MCF 10A (cell line): ENCODE measurements at regions of chr17 and their contacts with region 1.

Region 1: DNA sequence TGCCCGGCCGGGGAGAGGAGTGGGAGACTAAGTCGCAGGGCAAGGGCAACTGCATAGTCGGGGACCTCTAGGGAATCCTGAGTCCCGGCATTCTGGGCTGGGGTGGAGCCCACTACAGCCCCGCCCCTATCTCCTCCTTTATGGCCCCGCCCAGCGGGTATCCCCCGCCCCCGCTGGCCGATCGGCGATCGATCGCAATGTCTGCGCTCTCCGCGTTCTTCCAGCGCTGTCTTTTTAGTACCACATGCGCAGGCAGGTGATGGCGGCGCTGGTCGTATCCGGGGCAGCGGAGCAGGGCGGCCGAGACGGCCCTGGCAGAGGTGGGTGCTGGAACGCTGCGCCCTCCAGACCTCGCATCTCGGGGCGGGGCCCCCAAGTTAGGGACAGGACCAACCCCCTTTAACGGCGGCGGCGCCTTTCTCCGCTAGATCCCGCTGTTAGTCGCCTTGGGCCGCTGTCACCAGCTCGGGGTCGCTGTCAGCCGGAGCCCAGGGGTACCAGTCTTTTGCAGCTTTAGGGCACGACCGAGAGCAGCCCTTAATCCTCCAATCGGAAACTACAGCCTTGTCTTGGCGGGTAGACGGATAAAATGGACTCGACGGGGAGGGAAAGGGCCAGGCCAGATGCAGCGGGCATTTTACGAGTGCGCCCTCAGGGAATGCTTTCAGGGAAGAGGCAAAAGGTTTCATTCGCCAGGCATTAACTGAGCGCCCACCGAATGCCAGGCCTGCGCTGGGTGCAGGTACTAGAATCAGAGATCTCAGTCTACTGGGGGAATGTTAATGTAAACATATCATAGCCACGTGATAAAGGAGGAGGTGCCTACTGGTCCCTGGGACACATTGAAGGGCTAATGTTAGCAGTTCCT is at the start of gene DPH1:
- DNase-seq: peak; percentile 88
- H3K4me3 Mint-ChIP-seq: peak within 1 kb of the TSS; percentile 86
- H3K27ac Mint-ChIP-seq: peak within 1 kb of the TSS; percentile 74
- H3K4me1 Mint-ChIP-seq: peaks cover 5% of the 10 kb centered on the region
- H3K27me3 Mint-ChIP-seq: no peaks in the 10 kb centered on the region
- CTCF ChIP-seq: no peak
- total RNA-seq, gene DPH1: 29.7 and 45.2 TPM in 2 replicates

Region 2: DNA sequence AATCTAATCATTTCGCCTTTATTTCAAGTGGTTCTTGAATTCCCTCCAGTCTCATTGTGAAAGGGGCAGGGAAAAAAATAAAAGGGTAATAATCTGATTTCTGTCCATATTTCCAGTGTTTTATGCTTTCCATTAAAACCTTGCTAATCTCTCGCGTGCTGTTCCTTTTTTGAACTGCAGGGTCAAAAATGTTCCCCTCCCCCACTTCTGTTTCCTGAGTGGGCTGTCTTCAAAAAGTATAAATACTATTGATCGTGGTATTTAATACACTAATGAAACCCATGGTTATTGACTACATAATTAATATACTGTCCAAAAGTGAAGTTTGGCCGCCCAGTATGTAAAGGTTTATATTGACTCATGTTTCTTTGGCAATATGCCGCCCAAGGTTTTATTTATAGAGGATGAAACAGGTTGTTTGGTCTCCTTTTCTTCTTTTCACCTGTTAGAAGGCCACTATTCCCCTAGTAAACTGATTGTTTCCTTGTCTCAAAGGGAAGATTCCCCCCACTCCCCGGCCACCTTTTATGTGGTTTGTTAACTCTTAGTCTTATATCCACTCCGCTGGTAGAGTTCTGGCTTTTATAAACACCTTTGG is 130.6 kb before region 1 on chr17:
- CTCF ChIA-PET with region 1: interaction called, 28 read pairs
- POLR2A ChIA-PET with region 1: no interaction called
- intact Hi-C with region 1: no loop called
- DNase-seq: no peak
- H3K4me3 Mint-ChIP-seq: no peak overlapping the region
- H3K27ac Mint-ChIP-seq: no peak overlapping the region
- H3K4me1 Mint-ChIP-seq: no peaks in the 10 kb centered on the region
- H3K27me3 Mint-ChIP-seq: no peaks in the 10 kb centered on the region
- CTCF ChIP-seq: peak; percentile 34

Region 3: GRCh38 chr17:1908699-1909309 is 121.3 kb before region 1 on chr17:
- CTCF ChIA-PET with region 1: interaction called, 124 read pairs
- POLR2A ChIA-PET with region 1: interaction called, 50 read pairs
- intact Hi-C with region 1: loop called (anchors 1 kb)
- DNase-seq: peak; percentile 81
- H3K4me3 Mint-ChIP-seq: no peak overlapping the region
- H3K27ac Mint-ChIP-seq: no peak overlapping the region
- H3K4me1 Mint-ChIP-seq: no peaks in the 10 kb centered on the region
- H3K27me3 Mint-ChIP-seq: peaks cover 26% of the 10 kb centered on the region
- CTCF ChIP-seq: peak; percentile 73

Region 4: DNA sequence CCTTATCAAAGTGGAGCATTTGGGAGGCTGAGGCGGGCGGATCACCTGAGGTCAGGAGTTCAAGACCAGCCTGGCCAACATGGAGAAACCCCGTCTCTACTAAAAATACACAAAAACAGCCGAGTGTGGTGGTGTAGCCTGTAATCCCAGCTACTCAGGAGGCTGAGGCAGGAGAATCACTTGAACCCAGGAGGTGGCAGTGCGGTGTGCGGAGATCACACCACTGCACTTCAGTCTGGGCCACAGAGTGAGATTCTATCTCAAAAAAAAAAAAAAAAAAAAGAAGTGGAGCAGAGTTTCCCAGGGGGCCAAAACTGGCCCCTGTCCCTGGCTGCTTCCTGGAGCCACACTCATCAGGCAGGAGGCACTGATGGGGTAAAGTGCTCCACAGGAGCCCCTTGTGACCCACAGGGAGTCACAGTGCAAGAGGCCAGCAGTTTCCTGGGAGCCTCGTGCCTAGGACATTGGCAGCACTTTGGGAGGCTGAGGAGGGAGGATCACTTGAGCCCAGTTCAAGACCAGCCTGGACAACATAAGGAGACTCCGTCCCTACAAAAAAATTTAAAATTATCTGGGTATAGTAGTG is 49.4 kb before region 1 on chr17:
- CTCF ChIA-PET with region 1: interaction called, 9 read pairs
- POLR2A ChIA-PET with region 1: interaction called, 15 read pairs
- intact Hi-C with region 1: loop called (anchors 1 kb)
- DNase-seq: no peak
- H3K4me3 Mint-ChIP-seq: no peak overlapping the region
- H3K27ac Mint-ChIP-seq: peak overlapping the region; percentile 75
- H3K4me1 Mint-ChIP-seq: peaks cover 19% of the 10 kb centered on the region
- H3K27me3 Mint-ChIP-seq: no peaks in the 10 kb centered on the region
- CTCF ChIP-seq: no peak

Region 5: DNA sequence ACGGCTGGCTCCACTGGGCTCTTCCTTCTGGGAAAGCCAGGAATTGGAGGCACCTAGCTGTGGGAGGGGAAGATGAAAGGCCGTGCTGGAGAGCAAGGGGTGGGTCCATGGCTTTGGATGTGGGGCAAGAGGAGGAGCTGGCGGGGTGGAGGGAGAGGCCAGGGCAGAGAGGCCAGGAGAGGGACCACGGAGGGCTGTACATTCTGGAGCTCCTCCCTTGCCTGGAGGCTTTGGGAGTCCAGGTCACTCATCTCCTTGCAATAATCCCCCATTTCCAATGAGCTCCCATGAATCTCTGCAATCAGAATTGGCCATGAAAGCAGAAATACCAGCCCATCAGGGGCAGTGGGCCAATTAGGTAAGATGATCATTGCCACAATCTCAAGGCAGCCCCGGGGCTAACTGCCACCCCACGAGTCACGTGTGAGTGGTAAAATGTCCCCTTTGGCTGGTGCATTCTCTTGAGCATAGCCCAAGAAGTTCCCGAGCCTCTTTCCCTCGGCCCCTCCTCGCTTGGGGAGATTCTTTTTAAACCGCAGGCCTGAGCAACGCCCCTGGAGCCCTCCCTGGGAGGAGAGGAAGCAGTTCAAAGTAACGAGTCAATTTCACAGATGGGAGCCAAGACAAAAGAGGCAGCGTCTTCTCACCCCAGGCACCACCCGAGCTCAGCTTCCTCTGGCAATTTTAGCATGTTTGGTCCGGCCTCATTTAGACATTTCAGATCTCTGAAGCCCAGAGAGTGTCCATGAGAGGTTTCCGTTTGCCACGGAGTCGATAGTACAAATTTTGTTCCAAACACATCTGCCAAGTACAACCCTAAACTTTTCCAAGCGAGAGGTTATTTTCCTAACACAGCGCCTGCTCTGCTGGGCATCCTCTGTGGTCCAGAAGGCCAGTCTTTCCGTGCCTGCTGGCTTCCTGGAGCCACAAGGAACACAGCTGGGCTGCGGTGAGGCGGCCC is 18.5 kb before region 1 on chr17:
- CTCF ChIA-PET with region 1: interaction called, 4 read pairs
- POLR2A ChIA-PET with region 1: interaction called, 24 read pairs
- intact Hi-C with region 1: no loop called
- DNase-seq: peak; percentile 74
- H3K4me3 Mint-ChIP-seq: peak overlapping the region; percentile 53
- H3K27ac Mint-ChIP-seq: peak overlapping the region; percentile 85
- H3K4me1 Mint-ChIP-seq: peaks cover 39% of the 10 kb centered on the region
- H3K27me3 Mint-ChIP-seq: no peaks in the 10 kb centered on the region
- CTCF ChIP-seq: no peak

Region 6: GRCh38 chr17:2041561-2042366 is 11.6 kb after region 1 on chr17 and contains the start of gene OVCA2:
- CTCF ChIA-PET with region 1: interaction called, 7 read pairs
- POLR2A ChIA-PET with region 1: interaction called, 10 read pairs
- intact Hi-C with region 1: no loop called
- DNase-seq: peak; percentile 95
- H3K4me3 Mint-ChIP-seq: peak within 1 kb of the TSS; percentile 99
- H3K27ac Mint-ChIP-seq: peak within 1 kb of the TSS; percentile 98
- H3K4me1 Mint-ChIP-seq: peaks cover 15% of the 10 kb centered on the region
- H3K27me3 Mint-ChIP-seq: no peaks in the 10 kb centered on the region
- CTCF ChIP-seq: peak; percentile 18
- total RNA-seq, gene OVCA2: 28.8 and 33.5 TPM in 2 replicates